Endothelial cell of umbilical vein (primary cell): ENCODE measurements at regions of chr4 and their contacts with region 1.

Region 1: DNA sequence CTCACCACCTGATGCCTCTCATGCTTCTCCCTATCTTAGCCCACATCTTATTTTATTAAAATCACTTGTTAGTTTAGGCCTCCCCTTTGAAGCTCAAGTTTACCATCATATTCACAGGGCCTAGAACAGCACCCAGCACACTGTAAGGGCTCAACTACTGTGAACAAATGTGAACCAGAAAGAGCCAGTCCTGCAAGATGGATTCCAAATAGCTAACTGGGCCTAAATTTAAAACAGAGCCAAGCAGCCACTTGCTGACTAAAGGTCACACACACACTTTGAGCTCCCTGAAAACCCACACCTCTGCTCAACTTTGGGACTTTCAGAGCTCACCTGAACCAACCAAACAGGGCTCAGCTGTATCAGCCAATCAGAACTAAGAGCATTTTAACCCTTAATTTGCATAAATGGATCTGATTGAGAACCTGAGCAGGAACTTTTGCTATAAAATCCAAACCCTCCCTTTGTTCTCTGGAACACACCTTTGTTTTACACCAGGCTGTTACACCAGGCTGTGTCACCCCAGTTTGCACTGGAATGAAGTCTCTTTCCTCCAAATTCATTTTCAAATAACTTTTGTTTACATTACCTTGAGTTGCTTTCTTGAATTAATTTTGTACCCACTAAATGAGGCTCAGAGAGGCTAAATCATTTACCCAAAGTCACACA is 62.1 kb upstream of the EXOC1L start:
- DNase-seq: no peak
- H3K4me3 ChIP-seq: no peak overlapping the region
- H3K27ac ChIP-seq: peak overlapping the region; percentile 29
- H3K4me1 ChIP-seq: peaks cover 36% of the 10 kb centered on the region
- H3K27me3 ChIP-seq: no peaks in the 10 kb centered on the region
- CTCF ChIP-seq: no peak
- POLR2A ChIP-seq: no peak

Region 2: DNA sequence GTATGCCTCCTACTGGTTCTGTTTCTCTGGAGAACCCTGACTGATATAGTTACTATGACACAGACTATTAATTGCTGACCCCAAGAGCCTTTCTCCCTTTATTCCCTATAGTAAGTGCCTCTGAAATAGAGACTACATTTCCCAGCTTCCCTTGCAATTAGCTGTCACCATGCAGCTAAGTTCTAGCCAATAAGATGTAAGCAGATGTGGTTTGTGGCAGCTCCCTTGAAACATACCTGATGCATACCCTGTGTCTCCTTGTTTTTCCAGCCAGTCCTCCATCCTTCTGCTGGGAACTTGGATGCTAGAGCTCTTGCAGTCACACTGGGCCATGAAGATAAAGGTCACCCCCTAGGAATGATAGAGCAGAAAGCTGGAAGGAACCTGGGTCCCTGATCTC is 371.4 kb before region 1 on chr4:
- CTCF ChIA-PET with region 1: no interaction called
- POLR2A ChIA-PET with region 1: no interaction called
- dilution Hi-C with region 1: no loop called
- intact Hi-C with region 1: no loop called
- DNase-seq: peak; percentile 21
- H3K4me3 ChIP-seq: no peak overlapping the region
- H3K27ac ChIP-seq: no peak overlapping the region
- H3K4me1 ChIP-seq: no peaks in the 10 kb centered on the region
- H3K27me3 ChIP-seq: no peaks in the 10 kb centered on the region
- CTCF ChIP-seq: no peak
- POLR2A ChIP-seq: no peak

Region 3: GRCh38 chr4:55742655-55743202 is 14.8 kb before region 1 on chr4:
- CTCF ChIA-PET with region 1: no interaction called
- POLR2A ChIA-PET with region 1: no interaction called
- dilution Hi-C with region 1: no loop called
- intact Hi-C with region 1: no loop called
- DNase-seq: peak; percentile 5
- H3K4me3 ChIP-seq: no peak overlapping the region
- H3K27ac ChIP-seq: no peak overlapping the region
- H3K4me1 ChIP-seq: no peaks in the 10 kb centered on the region
- H3K27me3 ChIP-seq: peaks cover 0 to 2% of the 10 kb centered on the region in 2 experiments
- CTCF ChIP-seq: no peak
- POLR2A ChIP-seq: no peak

Region 4: GRCh38 chr4:55853484-55854046 is 96.1 kb after region 1 on chr4 and contains the start of gene EXOC1:
- CTCF ChIA-PET with region 1: no interaction called
- POLR2A ChIA-PET with region 1: no interaction called
- dilution Hi-C with region 1: no loop called
- intact Hi-C with region 1: loop called (anchors 2 kb)
- DNase-seq: peak; percentile 97
- H3K4me3 ChIP-seq: peak within 1 kb of the TSS; percentile 59 to 79 (median 64)
- H3K27ac ChIP-seq: peak within 1 kb of the TSS; percentile 51
- H3K4me1 ChIP-seq: peaks cover 8% of the 10 kb centered on the region
- H3K27me3 ChIP-seq: peaks cover 16 to 22% of the 10 kb centered on the region in 2 experiments
- CTCF ChIP-seq: no peak
- POLR2A ChIP-seq: peak; percentile 83
- total RNA-seq, gene EXOC1: 30.5 and 33.3 TPM in 2 replicates